ENCODE measurements at regions of chr3 and their contacts with region 1.

Region 1: DNA sequence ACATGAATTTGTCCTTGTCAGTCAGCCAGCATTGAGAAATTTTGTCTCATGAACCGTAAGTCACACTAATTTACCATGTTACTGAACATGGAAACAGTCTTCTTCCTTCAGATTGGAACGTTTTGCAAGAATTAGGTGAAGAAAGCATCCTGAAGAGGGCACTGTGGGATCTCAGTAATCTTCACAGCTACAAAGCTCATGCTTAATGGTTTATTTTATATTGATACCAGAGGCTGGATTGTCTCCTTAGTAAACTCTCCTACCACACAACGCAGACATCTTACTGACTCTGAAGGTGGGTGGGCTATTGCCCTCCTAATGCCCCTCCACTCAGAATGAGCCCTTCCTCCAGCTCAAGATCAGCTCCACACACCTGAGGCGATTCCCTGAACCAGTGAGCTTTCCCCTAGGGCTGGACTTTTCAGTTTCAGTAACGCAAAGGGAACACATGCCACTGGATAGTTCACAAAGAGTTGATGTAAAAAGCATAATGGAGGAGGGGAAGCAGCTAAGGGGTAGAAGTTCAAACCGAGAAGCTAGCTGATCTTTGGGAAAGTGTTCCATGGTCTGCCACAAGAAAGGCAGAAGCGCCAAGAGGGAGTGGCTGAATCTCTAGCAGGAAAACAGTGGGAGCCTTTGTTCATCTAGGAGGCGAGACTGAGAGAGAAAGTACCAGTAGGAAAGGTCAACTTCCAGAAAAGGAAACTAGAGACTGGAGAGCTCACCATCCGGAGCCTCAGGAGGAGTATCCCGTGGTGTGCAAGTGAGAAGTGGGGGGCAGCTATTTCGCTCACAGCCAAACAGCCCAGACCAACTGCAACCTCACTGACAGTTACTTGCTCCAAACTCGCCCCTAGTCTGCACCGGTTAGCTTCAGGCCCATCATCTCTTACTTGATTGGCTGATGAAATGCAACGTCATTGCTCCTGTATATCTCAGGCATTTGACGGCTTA is at the start of gene SLC9C1:
- DNase-seq: peak; percentile 85
- ATAC-seq: peak; percentile 78
- H3K4me3 ChIP-seq: peak within 1 kb of the TSS; percentile 52; the same call in 1 of the 2 replicates
- H3K27ac ChIP-seq: peak within 1 kb of the TSS; percentile 71
- H3K4me1 ChIP-seq: peaks cover 7% of the 10 kb centered on the region; the same call in 1 of the 2 replicates
- H3K27me3 ChIP-seq: no peaks in the 10 kb centered on the region
- CTCF ChIP-seq: peak; percentile 50 to 76 (median 71); a peak in 5 of 6 replicates
- EP300 ChIP-seq: no peak
- POLR2A ChIP-seq: no peak
- RAD21 ChIP-seq: peak; percentile 81
- polyA plus RNA-seq, gene SLC9C1: not detected

Region 2: GRCh38 chr3:112128843-112129727 is 164.6 kb before region 1 on chr3:
- CTCF ChIA-PET with region 1: interaction called, 142 read pairs
- POLR2A ChIA-PET with region 1: interaction called, 3 read pairs
- RAD21 ChIA-PET with region 1: no interaction called
- SMC1A ChIA-PET with region 1: interaction called, 11 read pairs
- in situ Hi-C with region 1: no loop called
- intact Hi-C with region 1: no loop called
- DNase-seq: no peak
- ATAC-seq: peak; percentile 60
- H3K4me3 ChIP-seq: peak overlapping the region; percentile 78
- H3K27ac ChIP-seq: peak overlapping the region; percentile 99
- H3K4me1 ChIP-seq: peaks cover 46% of the 10 kb centered on the region
- H3K27me3 ChIP-seq: no peaks in the 10 kb centered on the region
- CTCF ChIP-seq: no peak
- EP300 ChIP-seq: peak in 1 of 2 experiments; percentile 59; a peak in 2 of 4 replicates
- POLR2A ChIP-seq: peak; percentile 66; the same call in 1 of the 2 replicates
- RAD21 ChIP-seq: no peak

Region 3: DNA sequence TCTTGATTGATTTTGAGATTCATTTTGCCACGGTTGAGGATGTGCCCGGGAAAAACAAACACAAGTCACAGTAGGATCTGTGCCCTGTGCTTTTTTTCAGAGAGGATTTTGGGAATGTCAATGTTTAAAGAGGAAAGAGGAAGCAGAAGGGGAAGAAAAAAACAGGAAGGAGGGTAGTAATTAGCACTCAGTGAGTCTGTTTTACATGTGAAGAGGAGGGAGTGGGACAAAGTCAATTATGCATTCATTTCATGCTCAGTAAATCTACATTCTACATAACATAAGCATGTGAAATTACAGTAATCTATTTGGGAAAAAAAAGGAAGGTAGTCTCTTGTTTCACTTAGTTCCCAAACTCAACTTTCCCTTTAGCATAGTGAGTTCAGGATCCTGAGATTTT is 21.0 kb after region 1 on chr3:
- CTCF ChIA-PET with region 1: interaction called, 103 read pairs
- POLR2A ChIA-PET with region 1: no interaction called
- RAD21 ChIA-PET with region 1: interaction called, 75 read pairs
- SMC1A ChIA-PET with region 1: interaction called, 97 read pairs
- in situ Hi-C with region 1: no loop called
- intact Hi-C with region 1: no loop called
- DNase-seq: no peak
- ATAC-seq: no peak
- H3K4me3 ChIP-seq: no peak overlapping the region
- H3K27ac ChIP-seq: no peak overlapping the region
- H3K4me1 ChIP-seq: no peaks in the 10 kb centered on the region
- H3K27me3 ChIP-seq: no peaks in the 10 kb centered on the region
- CTCF ChIP-seq: no peak
- EP300 ChIP-seq: no peak
- POLR2A ChIP-seq: no peak
- RAD21 ChIP-seq: no peak

Region 4: GRCh38 chr3:112338021-112338726 is 44.5 kb after region 1 on chr3:
- CTCF ChIA-PET with region 1: interaction called, 11 read pairs
- POLR2A ChIA-PET with region 1: interaction called, 3 read pairs
- RAD21 ChIA-PET with region 1: interaction called, 32 read pairs
- SMC1A ChIA-PET with region 1: interaction called, 29 read pairs
- in situ Hi-C with region 1: no loop called
- intact Hi-C with region 1: no loop called
- DNase-seq: no peak
- ATAC-seq: peak; percentile 14
- H3K4me3 ChIP-seq: peak overlapping the region; percentile 23; the same call in 1 of the 2 replicates
- H3K27ac ChIP-seq: no peak overlapping the region
- H3K4me1 ChIP-seq: no peaks in the 10 kb centered on the region; the same call in 1 of the 2 replicates
- H3K27me3 ChIP-seq: no peaks in the 10 kb centered on the region
- CTCF ChIP-seq: no peak
- EP300 ChIP-seq: no peak
- POLR2A ChIP-seq: no peak
- RAD21 ChIP-seq: no peak

Region 5: DNA sequence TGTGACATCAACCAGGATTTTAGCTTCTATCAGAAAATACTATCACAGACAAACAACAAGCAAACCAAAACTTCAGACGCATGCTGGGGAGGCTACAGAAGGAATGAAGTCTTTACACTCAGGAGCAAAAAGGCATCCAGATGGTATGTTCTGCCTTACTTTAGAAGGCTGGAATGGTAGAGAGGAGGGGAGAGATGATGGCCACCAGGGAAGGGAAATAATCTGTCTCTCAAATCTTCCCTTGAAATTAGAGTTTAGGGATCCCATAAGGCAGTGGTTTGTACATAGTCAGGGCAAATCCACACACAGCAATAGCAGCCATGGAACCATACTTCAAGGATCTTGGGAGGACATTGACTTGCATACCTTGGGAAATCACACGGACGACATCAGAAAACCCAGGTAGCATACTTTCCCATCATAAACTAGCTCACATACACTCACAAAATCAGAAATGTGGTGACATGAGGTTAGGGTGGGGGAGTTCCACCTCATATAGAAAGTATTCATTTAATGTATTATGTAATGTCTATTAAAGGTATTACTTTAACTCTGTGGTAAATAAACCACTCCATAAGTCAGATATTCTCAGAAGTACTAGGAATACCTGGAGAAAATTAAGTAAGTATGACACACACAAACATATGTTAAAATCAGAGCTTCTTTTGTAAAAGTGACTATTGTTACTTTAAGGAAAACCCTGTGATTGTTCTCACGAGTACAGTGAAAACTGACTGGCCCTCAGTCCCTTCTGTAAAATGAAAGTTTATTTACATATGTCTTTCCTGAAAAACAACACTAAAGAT is 196.2 kb after region 1 on chr3:
- CTCF ChIA-PET with region 1: interaction called, 4 read pairs
- POLR2A ChIA-PET with region 1: interaction called, 4 read pairs
- RAD21 ChIA-PET with region 1: interaction called, 6 read pairs
- SMC1A ChIA-PET with region 1: interaction called, 11 read pairs
- in situ Hi-C with region 1: no loop called
- intact Hi-C with region 1: no loop called
- DNase-seq: peak; percentile 75
- ATAC-seq: peak; percentile 61
- H3K4me3 ChIP-seq: peak overlapping the region; percentile 51
- H3K27ac ChIP-seq: peak overlapping the region; percentile 97
- H3K4me1 ChIP-seq: peaks cover 13% of the 10 kb centered on the region; the same call in 1 of the 2 replicates
- H3K27me3 ChIP-seq: no peaks in the 10 kb centered on the region
- CTCF ChIP-seq: no peak
- EP300 ChIP-seq: peak in 1 of 2 experiments; percentile 27; a peak in 1 of 4 replicates
- POLR2A ChIP-seq: no peak
- RAD21 ChIP-seq: 0 out of 2 replicates have a peak, but pooled peaks have one; percentile 22

Region 6: DNA sequence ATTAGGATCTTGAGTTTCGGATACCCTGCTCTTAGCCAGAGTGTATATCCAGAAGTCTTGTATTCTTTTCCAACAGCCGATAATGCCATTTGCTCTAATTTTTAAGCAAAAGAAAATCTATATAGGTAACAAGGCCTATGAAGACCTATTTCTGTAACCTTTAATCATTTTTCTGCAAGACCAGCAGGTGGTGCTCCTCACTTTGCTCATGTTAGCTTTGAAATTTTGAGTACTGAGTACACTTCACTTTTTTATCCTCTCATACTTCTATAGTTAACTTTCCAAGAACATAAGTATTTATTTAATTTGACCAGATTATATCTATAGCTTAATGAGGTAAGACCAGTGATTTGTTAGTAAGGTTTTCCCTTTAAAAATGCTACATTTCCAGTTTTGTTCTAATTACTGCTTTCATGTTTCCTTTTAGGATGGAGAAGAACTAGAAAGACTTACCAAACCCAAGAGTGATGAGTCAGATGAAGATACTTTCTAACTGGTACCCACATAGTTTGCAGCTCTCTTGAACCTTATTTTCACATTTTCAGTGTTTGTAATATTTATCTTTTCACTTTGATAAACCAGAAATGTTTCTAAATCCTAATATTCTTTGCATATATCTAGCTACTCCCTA is 288.7 kb after region 1 on chr3:
- CTCF ChIA-PET with region 1: interaction called, 14 read pairs
- POLR2A ChIA-PET with region 1: interaction called, 3 read pairs
- RAD21 ChIA-PET with region 1: interaction called, 10 read pairs
- SMC1A ChIA-PET with region 1: interaction called, 6 read pairs
- in situ Hi-C with region 1: no loop called
- intact Hi-C with region 1: no loop called
- DNase-seq: no peak
- ATAC-seq: peak; percentile 71
- H3K4me3 ChIP-seq: no peak overlapping the region
- H3K27ac ChIP-seq: no peak overlapping the region
- H3K4me1 ChIP-seq: no peaks in the 10 kb centered on the region
- H3K27me3 ChIP-seq: no peaks in the 10 kb centered on the region
- CTCF ChIP-seq: peak; percentile 55 to 63 (median 60)
- EP300 ChIP-seq: no peak
- POLR2A ChIP-seq: no peak
- RAD21 ChIP-seq: peak; percentile 72

Region 7: GRCh38 chr3:112979240-112979832 is 685.7 kb after region 1 on chr3:
- CTCF ChIA-PET with region 1: interaction called, 6 read pairs
- POLR2A ChIA-PET with region 1: no interaction called
- RAD21 ChIA-PET with region 1: interaction called, 11 read pairs
- SMC1A ChIA-PET with region 1: interaction called, 6 read pairs
- in situ Hi-C with region 1: no loop called
- intact Hi-C with region 1: loop called (anchors 10 kb)
- DNase-seq: no peak
- ATAC-seq: peak; percentile 51
- H3K4me3 ChIP-seq: no peak overlapping the region
- H3K27ac ChIP-seq: no peak overlapping the region
- H3K4me1 ChIP-seq: peaks cover 25% of the 10 kb centered on the region
- H3K27me3 ChIP-seq: no peaks in the 10 kb centered on the region
- CTCF ChIP-seq: peak; percentile 35 to 62 (median 49); a peak in 4 of 6 replicates
- EP300 ChIP-seq: no peak
- POLR2A ChIP-seq: no peak
- RAD21 ChIP-seq: peak; percentile 74

Measured in GM12878 (cell line).